ENCODE measurements at regions of chr19 and their contacts with region 1.

Region 1: GRCh38 chr19:12672744-12673143 is 6.1 kb downstream of the WDR83 start:
- DNase-seq: no peak
- ATAC-seq: no peak
- H3K4me3 ChIP-seq: no peak overlapping the region
- H3K4me3 Mint-ChIP-seq: no peak overlapping the region
- H3K27ac ChIP-seq: no peak overlapping the region
- H3K27ac Mint-ChIP-seq: peak overlapping the region; percentile 73 to 75
- H3K4me1 ChIP-seq: peaks cover 28% of the 10 kb centered on the region
- H3K4me1 Mint-ChIP-seq: peaks cover 46 to 51% of the 10 kb centered on the region in 2 donors
- H3K27me3 ChIP-seq: no peaks in the 10 kb centered on the region
- H3K27me3 Mint-ChIP-seq: no peaks in the 10 kb centered on the region
- CTCF ChIP-seq: no peak

Region 2: GRCh38 chr19:12564016-12564664 is 108.6 kb before region 1 on chr19:
- intact Hi-C with region 1: loop called (anchors 1 kb)
- DNase-seq: peak; percentile 87 to 93
- ATAC-seq: peak; percentile 94 to 100 (median 99)
- H3K4me3 ChIP-seq: no peak overlapping the region
- H3K4me3 Mint-ChIP-seq: no peak overlapping the region
- H3K27ac ChIP-seq: no peak overlapping the region
- H3K27ac Mint-ChIP-seq: no peak overlapping the region
- H3K4me1 ChIP-seq: peaks cover 5% of the 10 kb centered on the region
- H3K4me1 Mint-ChIP-seq: peaks cover 4 to 5% of the 10 kb centered on the region in 2 donors
- H3K27me3 ChIP-seq: no peaks in the 10 kb centered on the region
- H3K27me3 Mint-ChIP-seq: no peaks in the 10 kb centered on the region
- CTCF ChIP-seq: peak; percentile 94

Region 3: GRCh38 chr19:12580163-12580694 is 92.5 kb before region 1 on chr19:
- intact Hi-C with region 1: no loop called
- DNase-seq: no peak
- ATAC-seq: no peak
- H3K4me3 ChIP-seq: no peak overlapping the region
- H3K4me3 Mint-ChIP-seq: no peak overlapping the region
- H3K27ac ChIP-seq: no peak overlapping the region
- H3K27ac Mint-ChIP-seq: no peak overlapping the region
- H3K4me1 ChIP-seq: no peaks in the 10 kb centered on the region
- H3K4me1 Mint-ChIP-seq: no peaks in the 10 kb centered on the region
- H3K27me3 ChIP-seq: no peaks in the 10 kb centered on the region
- H3K27me3 Mint-ChIP-seq: no peaks in the 10 kb centered on the region
- CTCF ChIP-seq: no peak

Region 4: DNA sequence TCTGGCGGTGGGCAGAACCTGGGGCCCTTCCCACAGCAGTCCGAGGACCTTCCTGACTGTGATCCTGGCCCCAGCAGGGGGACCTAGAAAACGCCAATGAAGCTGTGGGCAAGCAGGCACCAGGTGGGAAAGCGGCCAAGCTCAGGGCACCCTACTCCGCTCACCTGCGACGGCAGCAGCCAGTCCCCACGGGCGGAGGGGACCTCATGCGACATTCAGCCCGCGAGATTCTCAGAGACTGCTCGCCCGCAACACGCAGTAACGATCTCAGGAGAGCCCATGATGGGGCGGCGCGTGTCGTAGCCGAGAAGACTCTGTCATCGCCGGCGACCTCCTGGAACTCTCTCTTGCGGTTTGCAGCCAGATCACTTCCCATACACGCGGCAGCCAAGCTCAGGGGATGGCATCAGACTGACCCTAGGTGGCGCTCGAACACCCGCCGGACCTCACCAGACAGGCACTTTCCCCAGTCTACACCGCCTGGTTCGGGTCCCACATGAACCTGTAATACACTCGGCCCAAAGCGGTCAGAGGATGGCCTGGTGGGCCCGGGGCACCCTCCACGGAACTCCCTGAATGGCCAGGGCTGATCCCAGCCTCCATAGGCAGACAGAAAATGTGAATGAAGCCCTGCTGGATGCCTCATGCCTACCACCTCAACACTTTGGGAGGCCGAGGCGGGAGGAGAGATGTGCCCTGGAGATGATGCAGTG is 32.7 kb before region 1 on chr19:
- intact Hi-C with region 1: loop called (anchors 2 kb)
- DNase-seq: peak; percentile 74 to 89
- ATAC-seq: peak; percentile 96
- H3K4me3 ChIP-seq: peak overlapping the region; percentile 19
- H3K4me3 Mint-ChIP-seq: peak overlapping the region; percentile 62
- H3K27ac ChIP-seq: no peak overlapping the region
- H3K27ac Mint-ChIP-seq: peak overlapping the region; percentile 56 to 87
- H3K4me1 ChIP-seq: peaks cover 11% of the 10 kb centered on the region
- H3K4me1 Mint-ChIP-seq: peaks cover 7 to 13% of the 10 kb centered on the region in 2 donors
- H3K27me3 ChIP-seq: no peaks in the 10 kb centered on the region
- H3K27me3 Mint-ChIP-seq: no peaks in the 10 kb centered on the region
- CTCF ChIP-seq: peak; percentile 74

Measured in natural killer cell (primary cell).